Motor neuron (in vitro differentiated cells): ENCODE measurements at regions of chr6 and their contacts with region 1.

Region 1: GRCh38 chr6:142155895-142156757 is 9.1 kb downstream of the VTA1 start:
- ATAC-seq: peak in 2 of 8 experiments; percentile 43 to 53
- H3K4me3 ChIP-seq: no peak overlapping the region
- H3K27ac ChIP-seq: no peak overlapping the region
- H3K4me1 ChIP-seq: no peaks in the 10 kb centered on the region

Region 2: DNA sequence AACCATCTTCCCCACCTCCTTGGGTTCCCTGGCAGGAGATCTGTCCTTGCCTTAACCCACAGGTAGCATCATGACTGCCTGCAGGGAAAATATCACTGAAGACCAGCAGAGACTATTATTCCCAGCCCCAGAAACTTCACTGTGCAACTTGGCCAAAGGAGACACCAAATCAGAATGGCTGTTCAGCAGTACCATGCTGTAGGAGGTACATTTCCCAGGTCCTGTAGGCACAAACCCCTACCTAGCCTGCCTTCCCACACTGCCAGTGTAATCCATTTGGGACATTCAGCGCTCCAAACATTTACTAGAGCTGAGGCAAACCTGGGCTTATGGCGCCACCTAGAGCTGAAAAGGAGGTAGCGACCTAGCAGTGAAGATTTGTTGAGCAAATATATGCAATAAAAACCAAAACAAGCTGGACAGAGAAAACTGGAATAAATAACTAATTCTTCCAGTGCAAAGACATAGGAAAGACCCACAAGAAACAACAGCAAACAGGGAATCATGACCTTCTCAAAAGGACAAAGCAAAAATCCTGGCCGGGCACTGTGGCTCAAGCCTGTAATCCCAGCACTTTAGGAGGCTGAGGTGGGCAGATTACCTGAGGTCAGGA is 51.2 kb after region 1 on chr6:
- in situ Hi-C with region 1: loop called in 1 of 9 experiments (anchors 10 kb)
- ATAC-seq: peak in 4 of 8 experiments; percentile 28 to 88 (median 82)
- H3K4me3 ChIP-seq: no peak overlapping the region
- H3K27ac ChIP-seq: no peak overlapping the region
- H3K4me1 ChIP-seq: no peaks in the 10 kb centered on the region

Region 3: GRCh38 chr6:142355520-142356174 is 199.5 kb after region 1 on chr6:
- in situ Hi-C with region 1: no loop called
- ATAC-seq: no peak
- H3K4me3 ChIP-seq: no peak overlapping the region
- H3K27ac ChIP-seq: no peak overlapping the region
- H3K4me1 ChIP-seq: no peaks in the 10 kb centered on the region